ENCODE measurements at regions of chr3 and their contacts with region 1.

Region 1: DNA sequence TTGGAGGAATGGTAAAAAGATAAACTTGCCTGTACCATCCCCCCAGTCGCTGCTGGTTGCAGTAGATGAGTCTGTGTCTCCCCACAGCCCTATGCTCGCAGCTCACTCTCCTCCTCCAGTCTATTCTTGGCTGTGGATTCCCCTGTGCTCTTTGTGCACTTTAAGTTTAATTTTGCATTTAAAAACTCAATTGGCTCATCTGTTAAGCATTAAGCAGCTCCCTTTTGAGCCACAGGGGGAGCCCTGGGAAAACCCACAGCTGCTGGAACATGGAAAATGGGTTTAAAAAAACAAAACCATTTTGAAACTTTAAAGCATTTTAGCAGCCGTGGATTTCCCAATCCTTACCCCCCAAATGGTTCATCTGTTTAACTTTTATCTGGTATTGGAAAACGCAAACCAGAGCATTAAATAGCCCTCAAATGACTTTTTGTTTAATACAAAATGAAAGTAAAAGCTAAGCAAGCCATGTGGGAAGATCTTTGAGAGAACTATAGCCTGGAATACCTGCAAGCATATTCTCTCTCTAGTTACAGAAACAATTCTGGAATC is 536.9 kb downstream of the ZIC1 start:
- DNase-seq: peak in 1 of 2 donors; percentile 3
- ATAC-seq: peak; percentile 62 to 73
- H3K4me3 ChIP-seq: peak overlapping the region; percentile 28 to 63 (median 44)
- H3K27ac ChIP-seq: peak overlapping the region; percentile 21 to 55 (median 31)
- H3K4me1 ChIP-seq: no peaks in the 10 kb centered on the region
- H3K27me3 ChIP-seq: no peaks in the 10 kb centered on the region
- CTCF ChIP-seq: peak in 2 of 5 experiments; percentile 45 to 46
- POLR2A ChIP-seq: no peak

Region 2: GRCh38 chr3:147418808-147419701 is 527.0 kb before region 1 on chr3:
- in situ Hi-C with region 1: no loop called
- intact Hi-C with region 1: loop called (anchors 10 kb)
- DNase-seq: peak; percentile 72 to 93
- ATAC-seq: peak; percentile 75 to 83
- H3K4me3 ChIP-seq: peak overlapping the region; percentile 50 to 66 (median 57)
- H3K27ac ChIP-seq: peak overlapping the region; percentile 77 to 80 (median 79)
- H3K4me1 ChIP-seq: peaks cover 11 to 13% of the 10 kb centered on the region in 2 donors
- H3K27me3 ChIP-seq: peaks cover 3 to 32% (median 6%) of the 10 kb centered on the region in 3 donors
- CTCF ChIP-seq: no peak
- POLR2A ChIP-seq: peak; percentile 52 to 69

Measured in gastrocnemius medialis (tissue), 4 donors.